ENCODE measurements at regions of chr1 and their contacts with region 1.

Region 1: GRCh38 chr1:81414488-81415015 is 386.2 kb upstream of the ADGRL2 start:
- DNase-seq: peak; percentile 87

Region 2: DNA sequence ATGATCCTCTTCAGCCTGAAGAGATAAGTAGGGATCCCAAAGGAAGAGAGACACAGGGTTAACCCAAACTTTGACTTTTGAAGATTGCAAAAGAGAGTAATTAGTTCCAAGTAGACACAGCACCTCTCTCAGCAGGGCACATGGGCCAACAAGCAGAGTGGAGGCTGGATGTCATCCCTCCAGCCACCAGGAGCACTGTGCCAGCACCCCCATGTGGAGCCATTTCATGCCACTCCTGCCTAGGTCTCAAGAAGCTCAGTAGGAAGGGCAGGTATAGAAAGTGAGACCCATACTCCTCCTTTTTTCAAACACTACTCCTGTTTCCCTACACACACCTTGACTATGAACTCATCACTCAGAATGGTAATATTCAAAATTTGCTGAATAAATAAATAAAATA is 170.9 kb before region 1 on chr1:
- intact Hi-C with region 1: no loop called
- DNase-seq: no peak

Region 3: DNA sequence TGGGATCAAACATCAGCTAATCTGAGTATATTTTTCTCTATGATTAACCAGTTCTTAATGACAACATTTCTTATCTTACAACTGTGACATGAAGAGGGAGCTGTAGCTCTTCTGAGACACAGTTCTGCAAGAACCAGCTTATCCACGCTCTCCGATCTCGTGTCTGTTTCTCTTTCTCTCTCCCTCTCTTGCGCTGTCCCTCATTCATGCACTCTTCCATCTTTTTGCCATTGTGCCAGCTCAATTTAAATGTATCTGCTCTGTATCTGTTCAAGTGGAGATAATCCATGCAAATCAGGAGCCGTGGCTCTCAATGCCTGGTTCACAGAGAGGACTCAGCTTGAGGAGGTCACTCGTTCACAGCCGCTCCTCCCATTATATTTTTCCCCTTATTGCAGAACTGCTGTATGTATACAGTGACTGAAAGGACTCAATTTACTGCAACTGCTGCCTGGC is 108.5 kb before region 1 on chr1:
- intact Hi-C with region 1: loop called (anchors 2 kb)
- DNase-seq: no peak

Region 4: DNA sequence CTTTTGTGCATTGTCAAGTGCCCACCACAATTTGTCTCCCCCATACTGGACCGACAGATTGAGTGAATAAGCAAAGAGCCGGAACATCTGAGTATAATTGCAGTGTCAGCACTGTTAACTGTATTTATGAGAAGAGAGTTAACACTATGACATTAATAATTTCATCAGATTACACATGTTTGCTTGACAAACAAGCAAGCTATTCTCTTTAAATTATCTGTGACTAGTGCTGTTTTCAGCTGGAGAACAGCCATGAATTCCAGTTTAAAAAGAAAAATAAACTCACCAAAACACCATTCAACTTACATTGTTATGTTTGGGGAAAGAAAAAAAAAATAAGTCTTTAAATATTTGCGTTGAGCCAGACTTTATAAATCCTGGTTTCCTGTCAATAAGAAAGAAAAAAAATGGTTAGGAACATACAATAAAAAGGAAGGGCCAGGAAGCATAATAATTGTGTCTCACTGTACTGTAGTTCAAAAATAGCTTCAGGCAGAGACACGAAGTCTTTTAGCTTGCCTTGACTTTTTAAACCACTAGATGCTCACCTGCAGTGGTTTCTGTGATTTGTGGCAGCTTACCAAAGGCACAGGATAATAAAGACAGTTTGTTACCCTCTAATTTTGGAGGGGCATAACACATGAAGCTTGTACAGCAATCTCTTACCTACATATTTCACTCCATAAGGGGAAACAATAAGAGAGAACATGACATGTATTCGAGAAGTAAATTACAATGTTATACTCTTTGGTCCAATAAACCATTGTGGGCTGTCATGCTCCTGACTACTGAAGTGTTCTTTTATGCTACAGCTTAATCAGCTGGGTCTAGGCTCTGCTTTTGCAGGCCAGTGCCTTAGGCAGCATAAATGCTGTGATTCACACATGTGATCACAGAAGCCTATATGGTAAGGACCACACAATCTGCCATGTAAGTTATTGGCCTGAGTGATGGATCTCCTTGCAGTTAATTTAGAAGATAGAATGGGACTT is 84.2 kb after region 1 on chr1:
- intact Hi-C with region 1: loop called (anchors 5 kb)
- DNase-seq: no peak

Region 5: DNA sequence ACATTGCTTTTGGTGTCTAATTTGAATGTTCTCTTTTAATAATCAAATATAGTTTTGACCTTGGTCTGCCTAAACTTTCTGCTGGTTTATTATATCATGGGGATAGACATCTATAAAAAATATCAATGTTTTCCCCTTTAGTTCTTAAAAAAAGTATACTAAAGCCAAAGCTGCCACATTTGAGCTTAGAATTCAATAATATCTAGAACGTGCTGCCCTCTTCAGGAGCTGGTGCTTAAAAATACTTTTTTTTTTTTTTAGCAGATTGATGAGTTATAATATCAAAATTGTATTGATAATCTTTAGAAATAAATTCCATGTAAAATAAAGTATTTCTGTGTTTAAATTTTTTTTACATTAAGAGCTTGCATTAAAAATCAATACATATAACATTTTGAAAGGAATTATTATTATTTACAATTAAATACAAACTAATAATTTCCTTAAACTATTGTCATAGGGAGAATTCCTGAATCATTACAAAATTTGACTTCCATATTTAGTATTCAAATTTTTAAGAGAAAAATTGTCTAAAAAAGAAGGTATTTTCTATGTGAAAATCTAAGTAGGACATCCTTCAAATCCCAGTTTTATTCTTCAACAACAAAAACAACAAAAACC is 346.0 kb after region 1 on chr1:
- intact Hi-C with region 1: loop called (anchors 5 kb)
- DNase-seq: no peak

Region 6: GRCh38 chr1:81800695-81801650 is 386.4 kb after region 1 on chr1 and contains the start of gene ADGRL2:
- intact Hi-C with region 1: loop called (anchors 10 kb)
- DNase-seq: peak; percentile 86
- total RNA-seq, gene ADGRL2: 33.3 TPM